Naive thymus-derived CD8-positive, alpha-beta T cell (primary cell): ENCODE measurements at regions of chr11 and their contacts with region 1.

Region 1: GRCh38 chr11:67630228-67630942 is 648 bp upstream of the NUDT8 start:
- DNase-seq: peak in 9 of 10 donors; percentile 83 to 95 (median 88)
- ATAC-seq: peak; percentile 65 to 68
- H3K4me3 Mint-ChIP-seq: peak overlapping the region; percentile 82 to 95 (median 90)
- H3K27ac Mint-ChIP-seq: peak overlapping the region; percentile 45 to 95 (median 90)
- H3K4me1 Mint-ChIP-seq: peaks cover 6 to 13% (median 10%) of the 10 kb centered on the region in 4 donors
- H3K27me3 Mint-ChIP-seq: no peaks in the 10 kb centered on the region

Region 2: GRCh38 chr11:67613960-67614715 is 16.2 kb before region 1 on chr11:
- POLR2A ChIA-PET with region 1: interaction called, 10 read pairs
- DNase-seq: peak; percentile 68 to 88 (median 80)
- ATAC-seq: peak; percentile 87 to 94
- H3K4me3 Mint-ChIP-seq: peak overlapping the region; percentile 68 to 88 (median 84)
- H3K27ac Mint-ChIP-seq: peak overlapping the region; percentile 94 to 99 (median 97)
- H3K4me1 Mint-ChIP-seq: peaks cover 13 to 41% (median 33%) of the 10 kb centered on the region in 4 donors
- H3K27me3 Mint-ChIP-seq: no peaks in the 10 kb centered on the region

Region 3: DNA sequence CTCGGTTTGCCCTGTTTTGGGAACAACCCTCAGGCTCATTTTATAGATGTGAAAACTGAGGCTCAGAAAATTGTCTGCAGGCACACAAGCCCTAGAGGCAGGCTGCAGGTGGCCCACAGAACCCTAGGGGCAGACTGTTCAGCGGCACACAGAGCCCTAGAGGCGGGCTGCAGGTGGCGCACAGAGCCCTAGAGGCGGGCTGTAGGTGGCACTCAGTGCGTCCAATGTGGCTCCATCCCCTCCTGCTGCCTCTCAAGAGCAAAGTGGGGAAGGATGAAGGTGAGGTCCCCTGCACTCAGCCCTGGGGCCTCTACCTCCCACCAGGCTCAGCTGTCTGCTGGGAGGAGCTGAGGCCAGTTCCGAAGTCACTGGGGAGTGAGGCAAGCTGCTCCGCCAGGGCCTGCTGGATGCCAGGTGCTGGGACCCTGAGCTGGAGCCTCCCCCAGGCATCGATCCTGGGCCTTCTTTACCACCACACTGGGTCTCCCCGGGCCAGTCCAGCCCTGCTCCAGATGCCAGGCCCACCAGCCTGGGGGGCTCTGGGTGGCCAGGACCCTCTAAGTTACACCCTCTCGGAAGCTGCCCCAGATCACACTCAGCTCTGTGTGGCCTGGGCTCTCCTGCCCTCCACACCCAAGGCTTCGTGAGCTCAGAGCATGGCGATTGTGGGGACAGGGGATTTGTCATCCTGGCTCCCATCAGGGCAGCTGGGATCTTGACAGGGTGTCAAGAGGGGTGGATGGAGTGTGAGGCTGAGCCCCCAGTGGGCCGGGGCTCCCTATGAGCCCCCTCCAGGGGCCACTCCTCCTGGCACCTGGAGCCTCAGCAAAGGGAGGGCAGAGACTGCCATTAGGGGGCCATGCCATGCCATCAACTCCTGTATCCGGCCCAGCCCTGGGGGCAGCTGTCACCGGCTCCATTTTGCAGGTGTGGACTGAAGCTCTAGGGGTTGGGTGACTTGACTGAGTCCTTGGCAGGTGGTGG is 18.0 kb after region 1 on chr11:
- POLR2A ChIA-PET with region 1: interaction called, 61 read pairs
- DNase-seq: peak; percentile 27 to 78 (median 55)
- ATAC-seq: peak; percentile 86 to 90
- H3K4me3 Mint-ChIP-seq: peak overlapping the region; percentile 2 to 97 (median 58)
- H3K27ac Mint-ChIP-seq: peak overlapping the region in 6 of 10 donors; percentile 27 to 94 (median 71)
- H3K4me1 Mint-ChIP-seq: peaks cover 19 to 59% (median 50%) of the 10 kb centered on the region in 4 donors
- H3K27me3 Mint-ChIP-seq: no peaks in the 10 kb centered on the region

Region 4: DNA sequence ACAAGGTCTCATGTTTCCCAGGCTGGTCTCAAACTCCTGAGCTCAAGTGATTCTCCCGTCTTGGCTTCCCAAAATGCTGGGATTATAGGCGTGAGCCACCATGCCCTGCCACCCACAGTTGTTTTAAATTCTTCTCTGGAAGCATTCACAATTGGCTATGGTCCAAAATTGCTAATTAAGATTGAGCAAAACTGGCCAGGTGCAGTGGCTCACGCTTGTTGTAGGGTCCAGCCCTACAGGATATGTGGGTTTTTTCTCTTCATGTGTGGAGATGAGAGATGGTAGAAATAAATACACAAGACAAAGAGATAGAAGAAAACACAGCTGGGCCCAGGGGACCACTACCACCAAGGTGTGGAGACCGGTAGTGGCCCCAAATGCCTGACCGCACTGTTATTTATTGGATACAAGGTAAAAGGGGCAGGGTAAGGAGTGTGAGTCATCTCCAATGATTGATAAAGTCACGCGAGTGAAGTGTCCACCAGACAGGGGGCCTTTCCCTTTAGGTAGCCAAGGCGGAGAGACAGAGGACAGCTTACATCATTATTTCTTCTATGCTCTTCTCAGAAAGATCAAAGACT is 28.4 kb after region 1 on chr11:
- POLR2A ChIA-PET with region 1: interaction called, 16 read pairs
- DNase-seq: no peak
- ATAC-seq: no peak
- H3K4me3 Mint-ChIP-seq: no peak overlapping the region
- H3K27ac Mint-ChIP-seq: peak overlapping the region in 1 of 10 donors; percentile 79
- H3K4me1 Mint-ChIP-seq: peaks cover 0 to 2% (median 2%) of the 10 kb centered on the region in 4 donors
- H3K27me3 Mint-ChIP-seq: peaks cover 0 to 2% (median 0%) of the 10 kb centered on the region in 5 donors